ENCODE measurements at regions of chr5 and their contacts with region 1.

Region 1: DNA sequence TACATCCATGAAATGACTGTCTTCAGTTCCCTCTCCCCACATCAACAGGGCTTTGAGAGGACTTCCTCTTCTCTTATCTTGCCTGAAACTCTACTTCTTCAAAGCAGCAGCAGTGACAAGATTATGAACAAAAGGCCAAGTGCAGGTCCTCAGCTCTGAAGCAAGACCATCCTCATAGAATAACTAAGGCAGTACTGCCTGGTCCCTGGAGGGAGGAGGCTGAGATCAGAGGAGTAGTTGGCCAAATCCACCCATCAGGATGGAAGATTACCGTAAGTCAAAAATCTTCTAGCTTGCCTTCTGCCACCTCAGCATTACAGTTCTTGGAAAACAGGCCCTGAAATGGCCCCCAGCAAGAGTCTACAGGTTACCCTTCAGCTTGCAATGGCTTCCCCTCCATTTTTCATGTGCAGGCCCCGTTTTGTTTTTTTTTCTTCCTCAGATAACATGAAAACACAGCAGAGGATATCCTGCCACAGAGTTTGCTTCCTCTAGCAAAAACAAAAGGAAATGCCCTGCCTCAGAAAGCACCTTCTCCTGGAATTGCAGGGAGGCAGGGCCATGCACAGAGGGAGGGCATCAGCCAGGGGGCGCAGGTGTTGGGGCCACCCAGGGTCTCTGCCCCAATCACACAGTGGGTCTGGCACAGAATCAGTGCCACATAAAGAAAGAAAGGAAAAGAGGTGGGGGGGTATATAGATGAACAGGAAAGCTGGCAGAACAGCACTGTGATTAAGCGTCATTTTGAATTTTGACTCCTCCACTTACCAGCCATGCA is 40.0 kb downstream of the KLHL3 start:
- DNase-seq: peak; percentile 40
- ATAC-seq: peak; percentile 56
- H3K4me3 Mint-ChIP-seq: peak overlapping the region; percentile 51
- H3K27ac Mint-ChIP-seq: peak overlapping the region; percentile 90
- H3K4me1 Mint-ChIP-seq: peaks cover 42% of the 10 kb centered on the region
- H3K27me3 Mint-ChIP-seq: no peaks in the 10 kb centered on the region

Region 2: GRCh38 chr5:137545956-137546355 is 149.9 kb before region 1 on chr5:
- CTCF ChIA-PET with region 1: no interaction called
- POLR2A ChIA-PET with region 1: no interaction called
- DNase-seq: no peak
- ATAC-seq: no peak
- H3K4me3 Mint-ChIP-seq: no peak overlapping the region
- H3K27ac Mint-ChIP-seq: no peak overlapping the region
- H3K4me1 Mint-ChIP-seq: no peaks in the 10 kb centered on the region
- H3K27me3 Mint-ChIP-seq: peaks cover 12% of the 10 kb centered on the region

Region 3: GRCh38 chr5:137665678-137666460 is 30.0 kb before region 1 on chr5:
- CTCF ChIA-PET with region 1: interaction called, 56 read pairs
- POLR2A ChIA-PET with region 1: interaction called, 3 read pairs
- DNase-seq: peak; percentile 76
- ATAC-seq: peak; percentile 100
- H3K4me3 Mint-ChIP-seq: peak overlapping the region; percentile 10
- H3K27ac Mint-ChIP-seq: peak overlapping the region; percentile 83
- H3K4me1 Mint-ChIP-seq: peaks cover 37% of the 10 kb centered on the region
- H3K27me3 Mint-ChIP-seq: no peaks in the 10 kb centered on the region

Region 4: GRCh38 chr5:137712139-137712667 is 16.4 kb after region 1 on chr5:
- CTCF ChIA-PET with region 1: interaction called, 12 read pairs
- POLR2A ChIA-PET with region 1: interaction called, 4 read pairs
- DNase-seq: no peak
- ATAC-seq: no peak
- H3K4me3 Mint-ChIP-seq: no peak overlapping the region
- H3K27ac Mint-ChIP-seq: no peak overlapping the region
- H3K4me1 Mint-ChIP-seq: no peaks in the 10 kb centered on the region
- H3K27me3 Mint-ChIP-seq: no peaks in the 10 kb centered on the region

Region 5: DNA sequence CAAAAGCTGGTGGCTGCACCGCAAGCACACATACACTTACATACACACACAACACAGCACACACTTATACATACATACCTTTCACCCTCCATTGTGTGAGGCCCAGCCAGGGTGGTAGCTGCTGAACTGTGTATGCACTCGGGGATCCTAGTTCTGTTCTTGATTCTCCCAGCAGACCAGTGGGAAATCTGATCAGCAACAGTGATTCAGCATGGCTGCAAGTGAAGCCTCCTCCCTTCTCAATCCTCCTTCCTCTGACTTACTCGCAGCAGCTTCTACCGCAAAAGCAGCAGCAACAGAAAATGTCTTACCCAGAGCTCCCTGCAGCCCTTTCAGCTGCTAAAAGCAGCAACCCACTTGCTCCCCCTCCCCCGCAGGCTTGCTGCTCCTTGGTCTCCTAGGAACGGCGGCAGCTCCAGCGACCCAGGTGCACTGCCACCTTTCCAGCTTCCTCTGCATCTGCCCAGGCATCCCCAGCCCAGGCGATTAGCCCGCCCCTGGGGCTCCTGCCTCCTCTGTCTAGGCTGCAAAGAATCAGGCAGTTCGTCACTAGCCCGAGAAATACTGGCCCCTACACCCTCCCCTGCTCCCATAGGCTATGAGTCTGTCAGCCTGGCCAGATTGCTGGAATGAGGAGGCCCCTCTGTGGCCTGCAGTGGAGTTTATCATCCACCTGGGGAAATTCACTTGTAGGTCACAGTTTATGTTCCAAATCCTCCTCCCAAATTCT is 39.9 kb after region 1 on chr5 and contains the start of gene KLHL3:
- CTCF ChIA-PET with region 1: interaction called, 39 read pairs
- POLR2A ChIA-PET with region 1: interaction called, 17 read pairs
- DNase-seq: peak; percentile 54
- ATAC-seq: peak; percentile 48
- H3K4me3 Mint-ChIP-seq: no peak within 1 kb of the TSS
- H3K27ac Mint-ChIP-seq: no peak within 1 kb of the TSS
- H3K4me1 Mint-ChIP-seq: peaks cover 26% of the 10 kb centered on the region
- H3K27me3 Mint-ChIP-seq: no peaks in the 10 kb centered on the region
- total RNA-seq, gene KLHL3: 13.7 to 15.2 TPM

Region 6: DNA sequence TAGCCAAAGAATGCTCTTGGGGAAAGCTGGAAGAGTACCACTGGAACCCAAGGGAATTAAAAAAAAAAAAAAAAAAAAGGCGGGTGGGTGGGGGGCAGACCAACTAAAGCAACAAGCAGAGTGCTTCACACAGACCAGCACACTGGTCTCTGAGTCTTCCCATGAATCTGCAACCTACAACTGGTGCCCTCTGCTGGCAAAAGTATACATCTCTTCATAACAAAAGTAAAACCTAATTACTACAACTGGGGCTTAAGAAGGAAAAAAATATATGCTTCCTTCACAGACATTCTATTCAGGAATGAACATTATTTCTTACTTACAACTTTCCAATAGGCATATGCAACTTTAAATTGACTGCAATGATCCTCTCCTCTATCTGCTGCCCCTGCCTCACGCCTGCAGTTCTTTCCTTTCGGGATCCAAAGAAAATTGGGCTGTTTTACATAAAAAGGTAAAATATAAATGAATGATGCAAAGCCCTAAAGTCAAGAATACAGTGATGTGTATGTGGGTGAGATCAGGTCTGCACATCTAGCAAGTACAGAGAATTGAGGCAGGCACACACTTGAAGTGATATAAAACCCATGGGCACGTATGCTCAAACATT is 47.3 kb after region 1 on chr5:
- CTCF ChIA-PET with region 1: interaction called, 26 read pairs
- POLR2A ChIA-PET with region 1: interaction called, 7 read pairs
- DNase-seq: peak; percentile 82
- ATAC-seq: peak; percentile 88
- H3K4me3 Mint-ChIP-seq: no peak overlapping the region
- H3K27ac Mint-ChIP-seq: no peak overlapping the region
- H3K4me1 Mint-ChIP-seq: peaks cover 19% of the 10 kb centered on the region
- H3K27me3 Mint-ChIP-seq: no peaks in the 10 kb centered on the region

Measured in activated CD8-positive, alpha-beta T cell treated with anti-CD3 and anti-CD28 coated beads, Interleukin-2, amount 10 ng/mL, durations not matched to agents 7 days and 5 days (primary cell).